ENCODE measurements at regions of chr17 and their contacts with region 1.

Region 1: DNA sequence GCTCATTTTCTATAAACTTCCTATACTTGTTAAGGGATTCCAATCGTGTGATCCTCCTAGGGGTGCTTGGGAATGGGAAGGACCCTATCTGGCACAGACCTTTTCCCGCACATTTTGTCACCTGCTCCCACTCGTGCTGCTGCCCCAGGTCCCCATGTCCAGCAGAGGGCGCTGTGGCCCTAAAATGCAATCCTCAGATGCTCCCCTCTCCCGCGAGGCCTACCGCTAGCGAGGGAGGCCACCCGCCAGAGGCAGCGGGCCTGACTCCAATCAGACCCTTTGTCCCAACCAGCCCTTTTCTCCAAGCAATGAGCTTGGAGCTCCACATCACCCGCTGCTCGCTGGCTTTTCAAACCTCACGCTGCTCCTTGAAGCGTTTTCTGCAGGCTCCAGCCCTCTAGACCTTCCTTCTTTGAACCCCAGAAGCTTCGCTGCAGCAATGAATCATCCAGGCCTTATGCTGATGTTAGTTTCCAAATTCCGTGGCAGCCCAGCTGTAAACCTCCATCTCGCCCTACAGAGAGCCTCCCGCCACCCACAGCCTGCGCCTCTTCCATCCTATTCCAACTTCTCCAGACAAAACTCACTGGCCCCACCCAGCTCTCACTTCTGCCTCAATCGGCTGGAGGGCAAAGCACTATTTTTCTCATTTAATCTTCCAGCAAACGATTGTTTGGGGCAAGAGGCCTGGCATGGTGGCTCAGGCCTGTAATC is 23.6 kb upstream of the FZD2 start:
- DNase-seq: peak; percentile 90
- ATAC-seq: peak; percentile 97
- H3K4me3 Mint-ChIP-seq: no peak overlapping the region
- H3K27ac Mint-ChIP-seq: no peak overlapping the region
- H3K4me1 Mint-ChIP-seq: peaks cover 7% of the 10 kb centered on the region
- H3K27me3 Mint-ChIP-seq: peaks cover 2% of the 10 kb centered on the region

Region 2: DNA sequence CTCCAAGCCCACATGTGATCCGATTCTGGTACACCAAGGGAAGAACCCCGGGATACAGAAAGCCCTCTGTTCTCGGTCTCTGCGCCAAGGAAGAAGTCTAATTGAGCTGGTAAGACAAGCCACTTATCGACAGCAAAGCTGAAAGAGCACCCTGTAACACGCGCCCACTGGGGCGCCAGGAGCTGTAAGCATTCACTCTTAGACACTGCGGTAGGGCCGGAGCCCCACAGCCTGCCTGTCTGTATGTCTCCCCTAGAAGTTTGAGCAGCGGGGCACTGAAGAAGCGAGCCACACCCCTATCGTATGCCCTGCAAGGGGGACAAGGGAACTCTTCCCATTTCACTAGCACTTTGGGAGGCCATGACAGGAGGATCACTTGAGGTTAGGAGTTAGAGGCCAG is 95.6 kb after region 1 on chr17:
- CTCF ChIA-PET with region 1: interaction called, 10 read pairs
- POLR2A ChIA-PET with region 1: no interaction called
- DNase-seq: no peak
- ATAC-seq: no peak
- H3K4me3 Mint-ChIP-seq: no peak overlapping the region
- H3K27ac Mint-ChIP-seq: no peak overlapping the region
- H3K4me1 Mint-ChIP-seq: no peaks in the 10 kb centered on the region
- H3K27me3 Mint-ChIP-seq: peaks cover 5% of the 10 kb centered on the region

Region 3: DNA sequence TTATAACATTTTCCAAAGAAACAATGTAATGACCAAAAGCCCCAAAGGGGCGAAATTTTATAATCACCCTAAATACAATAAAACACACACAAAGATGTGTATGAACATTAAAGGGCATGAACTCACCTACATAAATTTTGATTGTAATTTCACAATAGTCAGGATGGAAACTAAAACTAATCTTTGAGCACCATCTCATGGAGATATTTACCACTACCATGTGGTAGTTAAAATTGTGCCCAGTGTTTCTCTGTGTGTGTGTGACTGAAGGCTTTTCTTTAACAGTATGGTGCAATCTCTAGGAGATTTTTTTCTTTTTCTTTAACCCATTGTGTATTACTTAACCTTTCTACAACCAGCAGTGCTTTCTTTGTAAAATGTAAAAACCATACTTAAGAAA is 102.9 kb after region 1 on chr17:
- CTCF ChIA-PET with region 1: interaction called, 15 read pairs
- POLR2A ChIA-PET with region 1: no interaction called
- DNase-seq: no peak
- ATAC-seq: no peak
- H3K4me3 Mint-ChIP-seq: no peak overlapping the region
- H3K27ac Mint-ChIP-seq: no peak overlapping the region
- H3K4me1 Mint-ChIP-seq: no peaks in the 10 kb centered on the region
- H3K27me3 Mint-ChIP-seq: peaks cover 11% of the 10 kb centered on the region

Region 4: DNA sequence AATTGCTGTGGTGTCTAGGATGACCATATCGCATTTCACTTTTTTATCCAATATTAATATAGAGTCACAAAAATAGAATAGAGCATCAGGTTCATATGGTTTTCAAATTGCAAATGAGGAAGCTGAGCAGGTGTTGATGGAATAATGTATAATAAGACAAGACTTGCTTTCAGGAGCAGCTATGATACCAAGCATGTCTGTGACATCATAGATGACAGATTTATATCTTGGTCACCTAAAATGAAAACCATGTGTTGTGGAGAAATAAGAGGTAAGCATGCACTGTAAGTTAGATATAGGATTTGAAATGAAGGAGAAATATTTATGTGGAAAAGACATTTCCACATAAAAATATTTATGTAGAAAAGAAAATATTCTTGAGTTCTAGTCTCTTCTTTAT is 131.2 kb after region 1 on chr17:
- CTCF ChIA-PET with region 1: interaction called, 10 read pairs
- POLR2A ChIA-PET with region 1: no interaction called
- DNase-seq: no peak
- ATAC-seq: no peak
- H3K4me3 Mint-ChIP-seq: no peak overlapping the region
- H3K27ac Mint-ChIP-seq: no peak overlapping the region
- H3K4me1 Mint-ChIP-seq: no peaks in the 10 kb centered on the region
- H3K27me3 Mint-ChIP-seq: peaks cover 20% of the 10 kb centered on the region

Region 5: GRCh38 chr17:44672479-44673093 is 138.9 kb after region 1 on chr17:
- CTCF ChIA-PET with region 1: interaction called, 29 read pairs
- POLR2A ChIA-PET with region 1: no interaction called
- DNase-seq: no peak
- ATAC-seq: no peak
- H3K4me3 Mint-ChIP-seq: no peak overlapping the region
- H3K27ac Mint-ChIP-seq: no peak overlapping the region
- H3K4me1 Mint-ChIP-seq: no peaks in the 10 kb centered on the region
- H3K27me3 Mint-ChIP-seq: peaks cover 3% of the 10 kb centered on the region

Measured in activated CD8-positive, alpha-beta T cell treated with anti-CD3 and anti-CD28 coated beads, Interleukin-2, amount 10 ng/mL, durations not matched to agents 7 days and 5 days (primary cell).